ENCODE measurements at regions of chr5 and their contacts with region 1.

Region 1: DNA sequence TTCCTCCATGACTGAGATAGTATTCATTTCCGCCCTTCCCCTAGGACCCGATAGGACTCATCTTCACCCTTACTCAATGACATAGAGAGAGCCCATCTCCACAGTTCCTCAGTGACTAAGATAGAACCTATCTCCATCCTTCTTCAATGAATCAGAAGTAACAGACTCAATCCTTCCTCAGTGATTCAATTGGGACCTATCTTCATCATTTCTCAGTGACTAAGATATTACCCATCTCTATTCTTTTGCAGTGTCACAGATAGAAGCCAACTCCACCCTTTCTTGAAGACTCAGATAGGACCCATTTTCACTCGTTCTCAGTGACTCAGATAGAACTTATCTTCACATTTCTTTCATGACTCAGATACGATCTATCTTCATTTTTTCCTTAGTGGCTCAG is 164.6 kb downstream of the FBXO4 start:
- DNase-seq: no peak

Region 2: GRCh38 chr5:41598011-41598410 is 491.7 kb before region 1 on chr5:
- intact Hi-C with region 1: loop called in 1 of 2 experiments (anchors 10 kb)
- DNase-seq: no peak

Region 3: GRCh38 chr5:42057254-42057690 is 32.4 kb before region 1 on chr5:
- intact Hi-C with region 1: no loop called
- DNase-seq: no peak

Measured in posterior vena cava (tissue), 2 donors.